ENCODE measurements at regions of chr17 and their contacts with region 1.

Region 1: DNA sequence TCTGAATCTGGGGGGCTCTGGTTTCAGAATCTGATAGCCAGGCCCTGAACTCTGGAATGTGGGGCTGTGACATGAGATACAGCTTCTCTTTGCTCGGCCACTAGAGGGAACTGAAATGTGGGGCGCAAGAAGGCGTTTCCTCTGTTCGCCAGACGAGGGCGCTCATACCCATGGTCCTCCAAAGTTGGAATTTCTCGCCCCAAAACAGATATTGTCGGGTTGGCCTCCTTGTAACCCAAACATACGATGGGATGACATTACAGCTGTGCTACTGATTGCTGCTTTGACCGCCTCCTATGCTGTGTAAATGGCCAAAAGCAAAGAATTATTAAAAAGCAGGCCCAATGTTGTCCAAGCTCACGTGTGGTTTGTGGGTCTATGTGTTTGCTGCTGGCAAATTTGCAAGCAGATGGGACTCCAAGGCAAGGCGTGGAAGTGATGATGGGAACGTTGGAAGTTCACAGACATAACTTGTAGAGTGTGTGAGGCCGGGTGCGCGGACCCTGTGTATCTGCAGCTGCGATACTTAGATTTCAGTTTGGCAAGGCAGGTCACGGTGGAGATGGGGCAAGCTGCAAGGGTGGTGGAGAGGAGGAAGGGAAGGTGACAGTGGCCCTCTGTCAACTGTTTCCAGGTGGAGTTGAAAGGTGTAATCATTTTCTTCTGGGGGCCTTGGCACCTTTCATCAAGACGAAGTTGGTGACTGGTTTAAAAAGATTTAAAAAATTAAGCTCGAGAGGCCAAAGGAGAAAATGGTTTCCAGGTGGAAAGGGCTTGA is 13.0 kb upstream of the MSI2 start:
- DNase-seq: peak; percentile 85
- ATAC-seq: peak; percentile 80
- H3K4me3 Mint-ChIP-seq: no peak overlapping the region
- H3K27ac Mint-ChIP-seq: no peak overlapping the region
- H3K4me1 Mint-ChIP-seq: peaks cover 9% of the 10 kb centered on the region
- H3K27me3 Mint-ChIP-seq: peaks cover 17% of the 10 kb centered on the region

Region 2: DNA sequence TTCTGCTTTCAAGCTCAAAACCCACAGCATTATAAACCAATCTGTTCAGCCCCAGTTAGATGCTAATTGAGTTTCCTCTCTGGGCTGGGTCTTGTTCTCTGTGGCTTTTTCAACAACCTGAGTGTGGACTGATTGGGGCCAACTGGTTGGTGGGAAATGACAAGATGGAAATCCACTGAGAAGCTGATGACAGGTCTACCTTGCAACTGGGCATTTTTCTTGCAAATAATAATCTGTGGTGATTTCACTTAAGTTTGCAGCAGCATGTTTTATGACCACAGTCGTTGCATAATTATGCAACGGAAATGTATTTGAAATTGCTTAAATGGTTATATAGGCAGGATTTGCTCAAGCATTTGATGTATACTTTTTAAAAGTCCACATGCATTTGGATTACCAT is 88.4 kb before region 1 on chr17:
- CTCF ChIA-PET with region 1: no interaction called
- POLR2A ChIA-PET with region 1: no interaction called
- DNase-seq: no peak
- ATAC-seq: no peak
- H3K4me3 Mint-ChIP-seq: no peak overlapping the region
- H3K27ac Mint-ChIP-seq: no peak overlapping the region
- H3K4me1 Mint-ChIP-seq: no peaks in the 10 kb centered on the region
- H3K27me3 Mint-ChIP-seq: peaks cover 3% of the 10 kb centered on the region

Region 3: DNA sequence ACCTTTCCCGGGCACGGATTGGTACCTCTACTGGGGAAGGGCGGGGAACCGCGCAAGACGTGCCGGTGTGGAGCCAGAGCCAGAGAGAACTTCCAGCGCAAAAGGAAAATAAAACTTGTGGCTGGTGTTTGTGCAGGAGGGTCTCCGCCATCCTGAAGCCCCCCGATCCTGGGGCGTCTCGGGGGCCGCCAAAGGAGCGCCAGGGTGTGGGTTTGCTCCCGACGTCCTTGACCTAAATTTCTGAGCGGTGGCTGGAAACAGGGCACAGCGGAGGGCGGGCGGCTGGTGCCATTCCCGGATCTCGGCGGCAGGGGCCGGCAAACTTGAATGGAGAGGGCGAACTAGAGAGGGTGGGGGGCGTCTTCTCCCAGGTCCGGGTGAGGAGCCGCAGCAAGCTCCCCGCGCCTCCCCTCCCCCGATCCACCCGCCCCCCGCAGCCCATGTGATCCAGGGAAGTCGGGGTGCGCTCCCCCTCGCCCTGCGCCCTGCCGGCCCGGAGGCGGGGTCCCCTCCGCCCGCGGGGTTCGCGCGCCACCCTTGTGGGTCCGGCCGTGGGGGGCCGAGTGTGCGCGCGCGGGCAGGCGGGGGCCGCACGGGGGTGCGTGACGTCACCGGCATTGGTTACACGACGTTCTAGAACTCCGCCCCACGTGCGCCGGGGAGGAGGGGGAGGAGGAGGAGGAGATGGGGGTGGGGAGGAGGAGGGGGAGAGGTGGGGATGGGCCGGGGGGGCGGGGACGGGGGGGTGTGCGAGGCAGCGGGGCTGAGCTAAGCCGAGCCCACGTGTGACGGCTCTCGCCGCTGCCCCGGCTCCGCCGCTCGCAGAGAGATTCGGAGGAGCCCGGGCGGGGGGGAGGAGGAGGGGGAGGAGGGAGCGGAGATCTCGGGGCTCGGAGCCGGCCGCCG is 12.7 kb after region 1 on chr17 and contains the start of gene MSI2:
- CTCF ChIA-PET with region 1: interaction called, 53 read pairs
- POLR2A ChIA-PET with region 1: interaction called, 3 read pairs
- DNase-seq: peak; percentile 94
- ATAC-seq: peak; percentile 85
- H3K4me3 Mint-ChIP-seq: peak within 1 kb of the TSS; percentile 84
- H3K27ac Mint-ChIP-seq: peak within 1 kb of the TSS; percentile 88
- H3K4me1 Mint-ChIP-seq: peaks cover 48% of the 10 kb centered on the region
- H3K27me3 Mint-ChIP-seq: peaks cover 6% of the 10 kb centered on the region
- total RNA-seq, gene MSI2: 123 to 125 TPM

Region 4: GRCh38 chr17:57284984-57285646 is 41.8 kb after region 1 on chr17:
- CTCF ChIA-PET with region 1: interaction called, 26 read pairs
- POLR2A ChIA-PET with region 1: no interaction called
- DNase-seq: peak; percentile 78
- ATAC-seq: peak; percentile 67
- H3K4me3 Mint-ChIP-seq: peak overlapping the region; percentile 70
- H3K27ac Mint-ChIP-seq: peak overlapping the region; percentile 89
- H3K4me1 Mint-ChIP-seq: peaks cover 81% of the 10 kb centered on the region
- H3K27me3 Mint-ChIP-seq: no peaks in the 10 kb centered on the region

Region 5: DNA sequence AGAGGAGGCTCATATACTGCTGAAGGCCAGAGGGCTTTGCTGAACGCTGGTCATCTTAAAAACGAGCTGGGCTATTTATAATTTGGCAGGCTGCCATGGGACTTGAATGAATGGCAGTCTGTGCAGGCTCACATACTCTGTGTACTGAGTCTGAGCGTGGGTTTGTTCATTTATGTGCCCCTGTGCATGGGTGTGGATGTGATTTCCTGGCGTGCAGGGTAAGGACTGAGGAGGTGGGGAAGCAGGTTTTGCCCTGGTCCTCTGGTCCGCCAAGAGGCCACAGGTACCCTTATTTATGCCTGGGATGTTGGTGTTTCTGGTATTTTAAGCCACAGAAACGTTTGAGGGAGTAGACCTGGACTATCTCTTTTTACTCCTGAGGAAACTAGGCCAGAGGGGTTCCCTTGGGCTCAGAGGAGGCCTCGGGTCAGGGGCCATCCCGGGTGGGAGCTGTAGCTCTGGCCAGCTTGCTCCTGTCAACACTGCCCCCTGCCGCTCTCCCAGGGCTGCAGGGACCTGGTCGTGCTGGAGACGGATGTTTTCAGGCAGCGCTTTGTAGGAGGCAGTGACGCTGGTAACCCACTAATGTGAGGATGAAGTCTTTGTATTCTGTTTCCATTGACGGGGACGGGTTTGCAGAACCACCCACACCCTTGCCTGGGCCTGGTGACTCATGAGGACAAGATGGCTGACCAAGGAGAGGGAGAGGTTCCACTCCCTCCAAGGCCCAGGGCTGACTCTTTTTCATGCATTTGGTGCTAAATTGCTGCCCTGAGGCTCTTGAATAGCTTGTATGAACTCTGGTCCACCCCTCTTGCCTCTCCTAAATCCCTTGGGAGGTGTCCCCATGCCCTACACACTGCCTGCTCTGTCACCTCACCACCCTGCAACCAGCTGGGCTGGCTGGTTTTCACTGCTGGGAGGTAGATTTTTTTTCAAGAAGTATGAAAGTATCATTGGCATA is 197.4 kb after region 1 on chr17:
- CTCF ChIA-PET with region 1: interaction called, 58 read pairs
- POLR2A ChIA-PET with region 1: no interaction called
- DNase-seq: peak; percentile 81
- ATAC-seq: peak; percentile 81
- H3K4me3 Mint-ChIP-seq: peak overlapping the region; percentile 20
- H3K27ac Mint-ChIP-seq: peak overlapping the region; percentile 93
- H3K4me1 Mint-ChIP-seq: peaks cover 79% of the 10 kb centered on the region
- H3K27me3 Mint-ChIP-seq: no peaks in the 10 kb centered on the region

Region 6: GRCh38 chr17:57498443-57498842 is 255.1 kb after region 1 on chr17:
- CTCF ChIA-PET with region 1: interaction called, 12 read pairs
- POLR2A ChIA-PET with region 1: no interaction called
- DNase-seq: no peak
- ATAC-seq: no peak
- H3K4me3 Mint-ChIP-seq: no peak overlapping the region
- H3K27ac Mint-ChIP-seq: no peak overlapping the region
- H3K4me1 Mint-ChIP-seq: peaks cover 14% of the 10 kb centered on the region
- H3K27me3 Mint-ChIP-seq: no peaks in the 10 kb centered on the region

Region 7: GRCh38 chr17:57671667-57672632 is 428.6 kb after region 1 on chr17:
- CTCF ChIA-PET with region 1: interaction called, 51 read pairs
- POLR2A ChIA-PET with region 1: no interaction called
- DNase-seq: peak; percentile 87
- ATAC-seq: peak; percentile 93
- H3K4me3 Mint-ChIP-seq: peak overlapping the region; percentile 66
- H3K27ac Mint-ChIP-seq: peak overlapping the region; percentile 96
- H3K4me1 Mint-ChIP-seq: peaks cover 66% of the 10 kb centered on the region
- H3K27me3 Mint-ChIP-seq: no peaks in the 10 kb centered on the region

Region 8: DNA sequence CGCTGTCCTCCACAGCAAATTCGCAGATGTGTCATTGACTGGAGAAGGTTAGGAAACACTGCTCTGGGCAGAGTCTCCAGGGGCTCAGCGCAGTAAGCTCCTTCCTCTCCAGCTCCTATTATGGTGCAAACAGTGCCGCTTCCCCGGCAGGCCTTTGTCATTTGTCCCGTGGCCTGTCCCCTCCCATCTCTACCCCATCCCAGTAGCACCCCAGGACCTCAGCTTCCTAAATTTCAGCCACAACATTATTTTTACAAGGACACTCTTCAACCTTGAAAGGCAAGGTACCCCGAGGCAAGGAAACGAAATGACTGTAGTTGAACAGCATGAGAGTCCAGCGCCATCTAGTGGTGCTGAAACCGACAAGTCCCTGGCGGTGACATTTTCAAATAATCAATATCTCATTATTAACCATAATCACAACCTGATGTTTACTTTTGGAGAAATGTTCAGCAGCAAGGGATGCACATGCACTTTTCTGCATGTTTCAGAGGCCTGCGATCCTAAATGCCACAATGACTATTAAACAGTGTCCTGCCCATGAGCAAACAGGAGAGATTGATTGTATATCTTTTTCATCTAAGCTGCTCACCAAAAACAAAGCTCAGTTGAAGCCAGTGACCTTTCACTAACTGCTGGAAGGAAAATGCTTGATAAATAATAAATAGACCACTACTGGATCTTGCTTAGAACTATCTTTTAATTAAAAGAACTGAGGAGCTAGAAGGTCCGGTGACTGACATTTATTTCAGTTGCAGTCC is 590.0 kb after region 1 on chr17:
- CTCF ChIA-PET with region 1: interaction called, 19 read pairs
- POLR2A ChIA-PET with region 1: no interaction called
- DNase-seq: peak; percentile 84
- ATAC-seq: peak; percentile 67
- H3K4me3 Mint-ChIP-seq: peak overlapping the region; percentile 35
- H3K27ac Mint-ChIP-seq: peak overlapping the region; percentile 80
- H3K4me1 Mint-ChIP-seq: no peaks in the 10 kb centered on the region
- H3K27me3 Mint-ChIP-seq: no peaks in the 10 kb centered on the region

Measured in activated CD8-positive, alpha-beta T cell treated with anti-CD3 and anti-CD28 coated beads, Interleukin-2, amount 10 ng/mL, durations not matched to agents 7 days and 5 days (primary cell).